HAP-1 (cell line): ENCODE measurements at regions of chr1 and their contacts with region 1.

Region 1: GRCh38 chr1:67760030-67760821 is 73.0 kb downstream of the GNG12 start:
- DNase-seq: peak; percentile 38 to 72
- H3K4me3 ChIP-seq: no peak overlapping the region
- H3K4me1 ChIP-seq: no peaks in the 10 kb centered on the region
- H3K27me3 ChIP-seq: no peaks in the 10 kb centered on the region

Region 2: DNA sequence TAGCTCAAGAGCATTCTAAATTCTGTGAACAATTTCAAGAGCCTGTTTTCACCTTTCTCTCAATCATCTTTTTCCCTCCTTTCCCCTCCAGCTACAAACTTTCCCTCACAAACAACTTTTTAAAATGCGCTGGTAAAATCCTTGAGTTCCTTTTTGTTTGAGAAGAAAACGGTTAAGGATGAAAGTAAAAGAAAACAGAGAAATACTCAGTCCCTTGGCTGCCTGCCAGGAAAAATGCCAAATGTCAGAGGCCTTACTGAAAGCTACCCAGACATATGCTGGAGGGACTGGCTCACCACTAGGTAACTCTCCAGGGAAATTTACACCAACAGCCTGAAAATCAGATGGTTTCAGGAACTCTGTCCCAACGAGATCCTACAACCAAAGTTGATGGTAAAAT is 319.0 kb before region 1 on chr1:
- in situ Hi-C with region 1: no loop called
- DNase-seq: peak; percentile 54 to 81
- H3K4me3 ChIP-seq: no peak overlapping the region
- H3K4me1 ChIP-seq: peaks cover 16% of the 10 kb centered on the region
- H3K27me3 ChIP-seq: no peaks in the 10 kb centered on the region

Region 3: GRCh38 chr1:67532452-67533216 is 227.6 kb before region 1 on chr1:
- in situ Hi-C with region 1: loop called (anchors 5 kb)
- DNase-seq: peak; percentile 58 to 62
- H3K4me3 ChIP-seq: no peak overlapping the region
- H3K4me1 ChIP-seq: 0 out of 2 replicates have a peak, but pooled peaks cover 2% of the 10 kb centered on the region
- H3K27me3 ChIP-seq: no peaks in the 10 kb centered on the region

Region 4: GRCh38 chr1:67696708-67697107 is 63.5 kb before region 1 on chr1:
- in situ Hi-C with region 1: no loop called
- DNase-seq: no peak
- H3K4me3 ChIP-seq: no peak overlapping the region
- H3K4me1 ChIP-seq: no peaks in the 10 kb centered on the region; the same call in none of the 2 replicates
- H3K27me3 ChIP-seq: no peaks in the 10 kb centered on the region

Region 5: GRCh38 chr1:67840449-67840848 is 80.2 kb after region 1 on chr1:
- in situ Hi-C with region 1: loop called (anchors 10 kb)
- DNase-seq: peak; percentile 39 to 81
- H3K4me3 ChIP-seq: no peak overlapping the region
- H3K4me1 ChIP-seq: peaks cover 60% of the 10 kb centered on the region
- H3K27me3 ChIP-seq: no peaks in the 10 kb centered on the region